ENCODE measurements at regions of chr12 and their contacts with region 1.

Region 1: DNA sequence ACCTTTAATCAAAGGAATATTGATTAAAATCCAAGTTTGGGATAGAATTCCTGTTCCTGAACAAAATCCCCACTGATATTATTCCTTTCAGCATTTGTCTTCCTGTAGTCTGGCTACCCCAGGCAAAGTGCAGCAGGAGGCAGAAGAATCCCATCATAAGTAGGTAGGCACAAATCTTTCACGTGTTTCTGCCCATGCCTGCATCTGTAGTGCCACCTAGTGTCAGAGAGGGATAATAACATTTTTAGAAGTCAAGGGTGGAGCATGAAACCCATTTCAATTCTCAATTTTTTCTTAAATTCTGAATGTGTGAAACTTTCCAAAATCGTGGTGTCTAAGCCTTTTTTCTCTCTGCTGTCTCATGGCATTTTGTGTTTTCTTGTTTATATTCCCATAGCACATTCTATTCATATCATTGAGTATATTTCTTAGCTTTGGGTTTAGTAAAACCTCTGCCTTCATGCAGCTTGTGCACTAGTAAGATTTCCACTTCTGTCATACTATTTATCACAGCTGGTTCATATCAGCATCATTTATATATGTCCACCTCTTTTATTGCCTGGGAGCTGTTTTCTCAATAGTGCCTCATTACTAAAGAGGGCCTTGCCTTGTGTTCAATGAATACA is 47.8 kb upstream of the RERG start:
- DNase-seq: peak; percentile 12
- H3K4me3 Mint-ChIP-seq: no peak overlapping the region
- H3K27ac Mint-ChIP-seq: no peak overlapping the region
- H3K4me1 Mint-ChIP-seq: no peaks in the 10 kb centered on the region
- H3K27me3 Mint-ChIP-seq: no peaks in the 10 kb centered on the region

Region 2: DNA sequence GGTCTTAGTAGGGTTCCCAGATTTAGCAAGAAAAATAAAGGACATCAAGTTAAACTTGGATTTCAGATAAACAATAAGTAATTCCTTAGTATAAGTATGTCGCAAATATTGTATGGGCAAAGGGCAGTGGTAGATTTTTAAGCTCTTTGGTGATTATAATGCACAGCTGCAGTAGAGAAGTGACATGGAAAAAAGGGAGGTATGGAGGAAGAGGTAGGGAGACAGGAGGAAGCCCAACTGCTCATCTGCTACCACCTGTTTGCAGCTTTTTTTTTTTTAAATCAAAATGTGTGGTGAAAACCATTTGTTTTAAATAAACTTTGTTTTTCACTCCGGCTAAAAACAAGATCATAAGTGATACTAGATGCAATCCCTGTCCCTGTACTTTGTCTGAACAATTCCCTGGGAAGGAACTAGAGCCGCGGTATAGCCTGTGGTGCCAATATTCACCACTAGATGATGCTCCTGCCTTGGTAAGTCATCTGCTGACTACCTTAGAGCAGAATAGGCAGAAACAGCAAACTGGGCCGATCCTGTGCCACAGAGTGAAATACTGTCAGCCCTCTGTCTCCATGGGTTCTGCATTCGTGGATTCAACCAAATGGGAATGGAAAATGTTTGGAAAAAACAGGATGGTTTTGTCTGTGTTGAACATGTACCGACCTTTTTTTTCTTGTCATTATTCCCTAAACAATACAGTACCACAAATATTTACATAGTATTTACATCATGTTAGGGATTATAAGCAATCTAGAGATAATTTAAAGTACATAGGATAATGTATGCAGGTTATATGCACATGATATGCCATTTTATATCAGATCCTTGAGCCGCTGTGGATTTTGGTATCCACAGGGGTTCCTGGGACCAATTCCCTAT is 639.0 kb before region 1 on chr12:
- intact Hi-C with region 1: loop called (anchors 1 kb)
- DNase-seq: peak; percentile 42
- H3K4me3 Mint-ChIP-seq: no peak overlapping the region
- H3K27ac Mint-ChIP-seq: no peak overlapping the region
- H3K4me1 Mint-ChIP-seq: no peaks in the 10 kb centered on the region
- H3K27me3 Mint-ChIP-seq: peaks cover 10% of the 10 kb centered on the region

Region 3: DNA sequence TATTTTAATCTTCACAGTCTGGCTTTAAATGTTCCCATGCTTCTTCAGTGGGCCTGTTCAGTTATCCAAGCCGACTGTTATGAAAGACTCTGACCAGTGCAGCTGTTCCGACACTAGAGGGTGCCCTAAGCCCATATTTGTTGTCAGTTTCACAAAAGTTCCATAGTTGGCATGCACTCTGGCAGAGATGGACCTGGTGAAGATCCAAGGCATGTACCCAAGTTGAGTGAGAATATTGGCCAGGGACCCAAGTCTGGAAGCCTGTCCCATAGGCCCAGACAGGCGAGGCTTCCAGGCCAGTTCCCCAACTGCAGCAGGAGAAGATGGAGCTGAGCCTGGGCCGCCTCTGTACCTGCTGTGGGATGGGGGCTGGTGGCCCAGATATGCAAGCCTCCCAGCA is 545.3 kb before region 1 on chr12:
- intact Hi-C with region 1: loop called (anchors 1 kb)
- DNase-seq: peak; percentile 31
- H3K4me3 Mint-ChIP-seq: no peak overlapping the region
- H3K27ac Mint-ChIP-seq: no peak overlapping the region
- H3K4me1 Mint-ChIP-seq: no peaks in the 10 kb centered on the region
- H3K27me3 Mint-ChIP-seq: peaks cover 15% of the 10 kb centered on the region

Region 4: DNA sequence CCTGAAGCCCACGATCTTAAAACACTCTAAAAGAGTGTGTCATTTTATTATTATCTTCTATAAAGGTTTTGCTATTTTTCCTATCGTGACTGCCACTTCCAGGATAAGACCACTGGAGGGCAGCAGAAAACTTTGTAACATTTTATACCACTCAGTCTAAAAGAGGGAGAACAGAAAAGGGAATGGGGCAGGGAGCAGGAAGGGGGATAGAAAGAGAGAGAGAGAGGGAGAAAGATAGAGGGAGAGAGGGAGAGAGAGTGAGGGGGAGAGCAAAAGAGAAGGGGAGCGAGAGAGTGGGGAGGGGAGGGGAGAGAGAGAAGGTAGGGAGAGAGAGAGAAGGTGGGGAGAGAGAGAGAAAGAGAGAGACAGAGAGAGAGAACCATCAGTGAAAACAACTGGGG is 423.7 kb before region 1 on chr12:
- intact Hi-C with region 1: loop called (anchors 1 kb)
- DNase-seq: peak; percentile 6
- H3K4me3 Mint-ChIP-seq: no peak overlapping the region
- H3K27ac Mint-ChIP-seq: no peak overlapping the region
- H3K4me1 Mint-ChIP-seq: peaks cover 5% of the 10 kb centered on the region
- H3K27me3 Mint-ChIP-seq: peaks cover 5% of the 10 kb centered on the region

Region 5: DNA sequence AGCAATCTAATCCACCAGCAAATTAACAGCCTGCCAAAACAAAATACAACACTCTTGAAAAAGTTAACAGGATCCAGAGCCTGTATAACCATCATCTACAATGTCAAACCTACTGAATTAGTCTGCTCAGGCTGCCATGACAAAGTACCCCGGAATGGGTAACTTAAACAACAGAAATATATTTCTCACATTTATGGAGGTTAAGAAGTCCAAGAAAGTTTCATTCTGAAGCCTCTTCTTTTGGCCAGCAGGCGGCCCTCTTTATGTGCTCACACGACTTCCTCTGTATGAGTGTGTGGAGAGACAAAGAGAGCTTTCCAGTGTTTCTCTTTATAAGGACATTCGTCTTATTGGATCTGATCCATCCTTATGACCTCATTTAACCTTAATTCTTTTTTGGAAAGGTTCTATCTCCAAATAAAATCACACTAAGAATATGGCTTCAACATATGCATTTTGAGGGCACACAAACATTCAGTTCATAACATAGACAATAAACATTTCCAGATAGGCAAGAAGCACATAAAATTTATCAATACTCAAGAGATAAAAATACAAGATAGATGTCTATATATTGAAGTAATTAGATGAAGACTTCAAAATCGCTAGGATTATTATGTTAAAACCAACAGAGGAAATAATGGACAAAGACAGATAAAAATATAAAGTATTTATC is 41.9 kb before region 1 on chr12:
- intact Hi-C with region 1: loop called (anchors 1 kb)
- DNase-seq: no peak
- H3K4me3 Mint-ChIP-seq: no peak overlapping the region
- H3K27ac Mint-ChIP-seq: no peak overlapping the region
- H3K4me1 Mint-ChIP-seq: no peaks in the 10 kb centered on the region
- H3K27me3 Mint-ChIP-seq: peaks cover 27% of the 10 kb centered on the region

Region 6: DNA sequence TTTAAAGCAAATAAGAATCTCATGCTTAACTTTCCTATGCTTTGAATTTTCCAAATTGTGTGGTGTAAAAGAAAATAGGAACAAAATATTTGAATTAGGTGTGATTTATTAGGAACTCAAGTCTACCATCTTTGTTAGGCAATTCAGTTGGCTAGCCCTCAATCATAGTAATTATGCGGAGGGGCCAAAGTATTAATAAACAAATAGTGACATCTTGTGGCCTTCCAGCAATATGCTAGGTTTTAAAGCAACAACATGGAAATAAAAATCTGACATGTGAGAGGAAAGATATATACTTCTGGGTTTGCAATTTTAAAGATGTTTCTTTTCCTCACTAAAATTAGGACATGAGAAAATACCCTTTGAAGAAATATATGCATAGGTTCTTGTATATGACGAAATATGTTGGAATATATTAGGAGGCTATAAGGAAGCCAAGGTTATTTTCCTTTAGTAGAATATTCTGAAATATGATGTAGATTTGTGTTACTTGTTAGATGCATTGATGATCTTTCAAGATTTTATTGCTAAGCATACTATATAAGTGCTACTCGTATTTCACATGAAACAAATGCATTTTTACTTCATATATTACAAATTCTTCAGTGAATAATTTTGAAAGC is 253.6 kb after region 1 on chr12:
- intact Hi-C with region 1: loop called (anchors 2 kb)
- DNase-seq: no peak
- H3K4me3 Mint-ChIP-seq: no peak overlapping the region
- H3K27ac Mint-ChIP-seq: no peak overlapping the region
- H3K4me1 Mint-ChIP-seq: no peaks in the 10 kb centered on the region
- H3K27me3 Mint-ChIP-seq: peaks cover 27% of the 10 kb centered on the region

Measured in activated T-helper 1 cell treated with anti-CD3 and anti-CD28 coated beads, Interleukin-12 subunit alpha, Interleukin-12 subunit beta, Interleukin-2, Interleukin-4 antibody, amounts not matched to agents 30 ng/mL and 10 ng/mL and 1 ng/mL, durations not matched to agents 14 hours and 24 hours and 36 hours (primary cell).